ENCODE measurements at regions of chr20 and their contacts with region 1.

Region 1: DNA sequence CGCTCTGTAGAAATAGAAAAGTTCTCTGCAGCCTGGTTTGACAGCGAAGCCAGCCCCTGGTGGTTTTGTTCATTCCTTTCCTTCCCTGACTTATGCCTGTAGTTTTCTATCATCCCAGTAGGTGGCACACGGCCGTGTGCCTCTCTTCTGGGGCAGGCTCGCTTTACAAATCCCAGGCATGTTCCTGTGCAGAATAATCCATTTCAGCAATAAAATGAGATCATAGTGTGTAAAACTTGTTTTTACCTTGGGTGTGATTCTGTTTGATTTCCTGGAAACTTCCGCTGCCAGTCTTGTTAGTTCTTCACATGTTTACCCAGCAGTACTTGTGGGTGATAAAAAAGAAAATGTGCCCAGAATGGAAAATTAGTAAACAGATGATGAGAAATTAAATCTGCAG is 7.4 kb upstream of the INSM1 start:
- DNase-seq: peak; percentile 69
- ATAC-seq: peak; percentile 71
- H3K4me3 Mint-ChIP-seq: no peak overlapping the region
- H3K27ac Mint-ChIP-seq: no peak overlapping the region
- H3K4me1 Mint-ChIP-seq: peaks cover 27% of the 10 kb centered on the region
- H3K27me3 Mint-ChIP-seq: peaks cover 49% of the 10 kb centered on the region

Region 2: DNA sequence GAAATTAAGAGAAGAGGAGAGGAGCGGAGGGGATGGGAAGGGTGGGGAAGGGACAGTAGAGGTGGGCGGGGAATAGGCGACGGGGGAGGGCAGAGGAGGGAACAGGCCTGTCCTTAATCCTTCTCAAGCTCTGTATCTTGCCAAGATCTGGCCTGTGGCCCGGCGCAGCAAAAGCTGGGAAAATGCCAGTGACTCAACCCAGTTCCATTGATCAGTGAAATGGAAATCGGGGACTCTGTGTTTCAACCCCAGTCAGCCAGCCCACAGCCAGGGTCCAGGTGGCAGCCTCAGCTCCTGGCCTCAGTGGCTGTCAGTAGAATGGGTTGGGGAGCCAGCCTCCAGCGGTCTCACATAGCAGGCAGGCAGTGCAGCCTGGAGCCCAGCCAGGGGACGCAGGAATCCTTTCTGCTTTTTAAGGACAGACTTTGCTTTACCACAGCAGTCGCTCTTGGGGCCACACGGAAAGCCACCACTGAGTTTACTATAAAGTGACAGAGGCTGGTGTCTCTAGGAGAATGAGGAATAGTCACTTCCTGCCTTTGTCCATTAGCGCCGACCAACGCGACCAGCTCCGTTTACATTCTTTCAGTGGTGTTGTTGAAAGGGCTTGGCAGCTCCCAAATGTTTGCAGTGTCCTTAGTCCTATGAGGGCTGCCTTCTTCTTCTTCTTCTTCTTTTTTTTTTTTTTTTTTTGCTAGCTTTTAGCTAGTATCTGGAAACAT is 474.4 kb before region 1 on chr20:
- CTCF ChIA-PET with region 1: no interaction called
- POLR2A ChIA-PET with region 1: no interaction called
- intact Hi-C with region 1: no loop called
- DNase-seq: no peak
- ATAC-seq: no peak
- H3K4me3 Mint-ChIP-seq: no peak overlapping the region
- H3K27ac Mint-ChIP-seq: no peak overlapping the region
- H3K4me1 Mint-ChIP-seq: no peaks in the 10 kb centered on the region
- H3K27me3 Mint-ChIP-seq: peaks cover 14% of the 10 kb centered on the region

Region 3: GRCh38 chr20:20412750-20413149 is 52.3 kb after region 1 on chr20:
- CTCF ChIA-PET with region 1: interaction called, 3 read pairs
- POLR2A ChIA-PET with region 1: no interaction called
- intact Hi-C with region 1: loop called in 1 of 2 experiments (anchors 2 kb)
- DNase-seq: peak; percentile 55
- ATAC-seq: peak; percentile 86
- H3K4me3 Mint-ChIP-seq: peak overlapping the region; percentile 63
- H3K27ac Mint-ChIP-seq: peak overlapping the region; percentile 92
- H3K4me1 Mint-ChIP-seq: peaks cover 60% of the 10 kb centered on the region
- H3K27me3 Mint-ChIP-seq: no peaks in the 10 kb centered on the region

Region 4: DNA sequence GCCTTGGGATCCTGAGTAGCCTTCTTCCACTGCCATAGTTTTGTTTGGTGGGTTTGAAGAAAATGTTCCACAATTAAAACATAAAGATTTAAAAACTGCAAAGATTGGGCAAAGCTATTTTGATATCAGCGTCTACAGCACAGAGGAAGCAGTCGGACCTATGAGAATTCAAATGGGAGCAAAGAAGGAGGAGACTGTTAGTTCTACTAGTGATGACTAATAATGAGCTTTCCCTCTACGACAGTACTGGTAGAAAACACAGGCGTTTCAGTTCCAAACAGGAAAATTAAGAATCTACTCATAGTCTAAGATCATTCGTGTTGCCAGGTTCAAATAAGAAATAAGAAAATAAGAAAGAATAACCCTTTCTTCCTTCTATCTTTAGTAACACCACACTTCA is 128.6 kb after region 1 on chr20:
- CTCF ChIA-PET with region 1: no interaction called
- POLR2A ChIA-PET with region 1: no interaction called
- intact Hi-C with region 1: loop called (anchors 2 to 5 kb)
- DNase-seq: no peak
- ATAC-seq: peak; percentile 17
- H3K4me3 Mint-ChIP-seq: peak overlapping the region; percentile 67
- H3K27ac Mint-ChIP-seq: peak overlapping the region; percentile 84
- H3K4me1 Mint-ChIP-seq: peaks cover 64% of the 10 kb centered on the region
- H3K27me3 Mint-ChIP-seq: no peaks in the 10 kb centered on the region

Region 5: GRCh38 chr20:20593447-20594170 is 233.1 kb after region 1 on chr20:
- CTCF ChIA-PET with region 1: no interaction called
- POLR2A ChIA-PET with region 1: no interaction called
- intact Hi-C with region 1: loop called in 1 of 2 experiments (anchors 1 kb)
- DNase-seq: peak; percentile 40
- ATAC-seq: peak; percentile 53
- H3K4me3 Mint-ChIP-seq: no peak overlapping the region
- H3K27ac Mint-ChIP-seq: no peak overlapping the region
- H3K4me1 Mint-ChIP-seq: no peaks in the 10 kb centered on the region
- H3K27me3 Mint-ChIP-seq: no peaks in the 10 kb centered on the region

Region 6: DNA sequence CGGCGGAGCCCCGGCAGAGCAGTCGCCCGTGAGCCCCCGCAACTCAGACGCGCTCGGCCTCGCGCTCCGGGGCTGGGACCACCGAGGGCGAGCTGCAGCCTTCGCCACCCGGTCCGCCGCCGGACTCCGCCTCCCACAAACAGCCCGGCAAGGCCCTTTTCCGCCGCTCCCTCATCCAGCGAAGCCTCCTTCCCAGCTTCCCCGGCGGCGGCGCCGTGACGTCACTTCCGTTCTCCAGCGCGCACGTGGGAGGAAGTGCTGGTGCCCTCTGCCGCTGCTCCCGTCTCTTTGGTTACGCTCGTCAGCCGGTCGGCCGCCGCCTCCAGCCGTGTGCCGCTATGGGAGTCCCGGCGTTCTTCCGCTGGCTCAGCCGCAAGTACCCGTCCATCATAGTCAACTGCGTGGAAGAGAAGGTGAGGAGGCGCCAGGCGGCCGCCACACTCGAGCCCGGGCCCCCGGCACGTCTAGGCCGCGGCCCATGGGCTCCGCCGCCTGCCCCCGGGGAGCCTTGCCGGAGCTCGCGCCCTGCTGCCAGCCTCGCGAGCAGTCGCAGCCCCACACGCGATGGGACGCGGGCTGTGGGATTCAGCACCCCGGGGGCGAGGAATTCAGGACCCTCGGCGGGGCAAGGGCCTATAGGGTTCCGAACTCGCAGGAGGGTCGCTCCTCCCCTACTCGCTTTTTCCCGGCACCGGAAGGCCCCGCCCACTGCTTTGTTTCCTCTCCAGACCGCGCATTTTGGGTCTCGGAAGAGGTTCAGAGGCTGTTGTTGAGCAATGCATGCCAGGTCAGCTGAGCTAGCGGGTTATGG is 942.8 kb after region 1 on chr20 and contains the start of gene XRN2:
- CTCF ChIA-PET with region 1: no interaction called
- POLR2A ChIA-PET with region 1: no interaction called
- intact Hi-C with region 1: loop called in 1 of 2 experiments (anchors 10 kb)
- DNase-seq: peak; percentile 98
- ATAC-seq: peak; percentile 85
- H3K4me3 Mint-ChIP-seq: peak within 1 kb of the TSS; percentile 93
- H3K27ac Mint-ChIP-seq: peak within 1 kb of the TSS; percentile 98
- H3K4me1 Mint-ChIP-seq: peaks cover 31% of the 10 kb centered on the region
- H3K27me3 Mint-ChIP-seq: no peaks in the 10 kb centered on the region
- total RNA-seq, gene XRN2: 87.1 to 88.4 TPM